HepG2 (cell line): ENCODE measurements at regions of chr5 and their contacts with region 1.

Region 1: DNA sequence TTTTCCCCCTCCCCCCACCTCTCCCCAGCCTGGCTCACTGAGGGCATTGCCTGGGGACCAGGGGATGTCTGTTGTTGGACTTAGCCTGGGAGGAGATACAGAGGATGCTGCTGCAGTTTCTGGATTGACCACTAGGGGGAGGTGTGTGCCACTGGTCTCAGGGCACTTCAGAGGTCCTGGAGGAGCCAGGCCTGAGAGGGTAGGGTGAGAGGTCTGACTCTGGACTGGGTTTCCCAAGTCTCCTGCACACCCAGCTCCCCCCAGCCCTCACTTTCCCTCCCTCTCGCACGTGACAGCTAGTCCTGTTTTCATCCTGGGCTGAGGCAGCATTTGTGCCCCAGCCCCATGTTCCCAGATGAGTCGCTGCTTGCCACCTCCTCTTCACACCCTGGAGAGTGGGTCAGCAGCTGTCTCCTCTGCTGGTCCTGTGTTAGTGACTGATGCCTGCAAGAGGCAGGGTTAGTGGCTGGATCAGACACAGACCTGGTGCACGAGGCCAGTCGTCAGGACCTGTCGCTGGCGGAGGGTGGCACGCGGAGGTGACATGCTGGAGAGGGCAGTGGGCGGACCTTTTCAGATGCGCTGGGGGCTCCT is 4.4 kb downstream of the IL3 start:
- DNase-seq: peak; percentile 52
- ATAC-seq: peak; percentile 85
- H3K4me3 ChIP-seq: no peak overlapping the region
- H3K27ac ChIP-seq: no peak overlapping the region
- H3K4me1 ChIP-seq: peaks cover 9% of the 10 kb centered on the region
- H3K27me3 ChIP-seq: peaks cover 4 to 26% of the 10 kb centered on the region in 2 experiments; a peak in 3 of 5 replicates
- CTCF ChIP-seq: peak; percentile 84
- EP300 ChIP-seq: no peak
- POLR2A ChIP-seq: no peak
- RAD21 ChIP-seq: peak; percentile 28; the same call in 1 of the 2 replicates

Region 2: DNA sequence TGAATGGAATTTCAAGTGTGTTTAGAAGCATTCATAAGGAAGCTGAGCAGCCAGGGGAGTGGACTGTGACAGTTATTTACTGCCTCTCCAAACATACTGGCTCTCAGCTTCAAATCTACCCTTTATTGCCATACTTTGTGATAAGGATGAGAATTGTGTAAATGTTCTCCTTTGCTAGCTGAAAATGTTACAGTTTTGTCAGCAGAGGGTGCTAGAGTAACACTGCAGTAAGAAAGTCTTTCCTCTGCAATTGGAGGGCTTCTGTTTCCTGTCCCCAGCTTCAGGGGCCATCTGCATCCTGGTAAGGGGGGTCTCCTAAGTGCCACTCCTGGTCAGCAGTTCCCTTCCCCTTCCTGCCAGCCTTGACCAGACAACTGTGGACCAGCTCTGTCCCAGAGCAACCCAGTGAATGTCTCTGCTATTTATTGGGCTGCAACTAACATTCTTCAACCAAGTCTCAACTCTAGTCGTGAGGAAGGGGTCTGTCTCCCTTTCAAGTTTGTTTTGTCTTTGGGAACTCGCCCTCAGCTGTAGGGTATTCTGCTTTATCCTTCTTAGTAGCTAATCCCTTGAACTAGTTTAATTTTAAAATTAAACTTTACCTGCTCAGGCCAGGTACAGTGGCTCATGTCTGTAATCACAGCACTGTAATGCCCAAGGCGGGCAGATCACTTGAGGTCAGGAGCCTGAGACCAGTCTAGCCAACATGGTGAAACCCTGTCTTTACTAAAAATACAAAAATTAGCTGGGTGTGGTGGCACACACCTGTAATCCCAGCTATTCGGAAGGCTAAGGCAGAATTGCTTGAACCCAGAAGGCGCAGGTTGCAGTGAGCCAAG is 475.1 kb before region 1 on chr5:
- CTCF ChIA-PET with region 1: no interaction called
- POLR2A ChIA-PET with region 1: no interaction called
- in situ Hi-C with region 1: no loop called
- intact Hi-C with region 1: loop called (anchors 1 kb)
- DNase-seq: peak; percentile 60
- ATAC-seq: peak; percentile 86
- H3K4me3 ChIP-seq: no peak overlapping the region
- H3K27ac ChIP-seq: no peak overlapping the region
- H3K4me1 ChIP-seq: peaks cover 15% of the 10 kb centered on the region; the same call in 1 of the 2 replicates
- H3K27me3 ChIP-seq: no peaks in the 10 kb centered on the region
- CTCF ChIP-seq: peak; percentile 87
- EP300 ChIP-seq: no peak
- POLR2A ChIP-seq: no peak
- RAD21 ChIP-seq: peak; percentile 87

Region 3: GRCh38 chr5:131810510-131811249 is 254.2 kb before region 1 on chr5:
- CTCF ChIA-PET with region 1: no interaction called
- POLR2A ChIA-PET with region 1: no interaction called
- in situ Hi-C with region 1: no loop called
- intact Hi-C with region 1: loop called (anchors 1 kb)
- DNase-seq: peak; percentile 16
- ATAC-seq: peak; percentile 66
- H3K4me3 ChIP-seq: no peak overlapping the region
- H3K27ac ChIP-seq: no peak overlapping the region
- H3K4me1 ChIP-seq: no peaks in the 10 kb centered on the region
- H3K27me3 ChIP-seq: no peaks in the 10 kb centered on the region; a peak in 1 of 5 replicates
- CTCF ChIP-seq: peak; percentile 72
- EP300 ChIP-seq: no peak
- POLR2A ChIP-seq: no peak
- RAD21 ChIP-seq: peak; percentile 67

Region 4: DNA sequence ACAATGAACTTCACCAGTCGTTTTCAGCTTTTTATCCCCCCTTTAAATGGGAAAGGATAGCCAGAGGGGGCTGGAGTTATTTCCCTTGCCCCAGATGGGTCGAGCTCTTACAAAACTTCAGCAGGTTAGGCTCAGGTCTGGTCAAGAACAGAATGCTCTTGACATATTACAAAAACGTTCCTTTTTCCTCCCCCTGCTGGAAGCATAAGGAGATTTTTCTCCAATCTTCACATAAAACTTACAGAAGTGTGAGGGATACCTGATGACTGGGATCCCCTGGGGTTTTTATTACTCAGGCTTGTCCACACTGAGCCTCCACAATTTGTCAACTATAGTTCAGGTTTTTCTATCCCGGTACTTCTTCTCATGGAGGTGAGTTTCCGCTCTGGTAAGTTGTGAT is 69.5 kb after region 1 on chr5:
- CTCF ChIA-PET with region 1: interaction called, 25 read pairs
- POLR2A ChIA-PET with region 1: no interaction called
- in situ Hi-C with region 1: no loop called
- intact Hi-C with region 1: loop called (anchors 1 kb)
- DNase-seq: peak; percentile 15
- ATAC-seq: peak; percentile 53; the same call in 2 of the 3 replicates
- H3K4me3 ChIP-seq: no peak overlapping the region
- H3K27ac ChIP-seq: no peak overlapping the region
- H3K4me1 ChIP-seq: no peaks in the 10 kb centered on the region
- H3K27me3 ChIP-seq: no peaks in the 10 kb centered on the region; a peak in 1 of 5 replicates
- CTCF ChIP-seq: peak; percentile 25; the same call in 1 of the 2 replicates
- EP300 ChIP-seq: no peak
- POLR2A ChIP-seq: no peak
- RAD21 ChIP-seq: no peak

Region 5: GRCh38 chr5:132176987-132177386 is 112.2 kb after region 1 on chr5:
- CTCF ChIA-PET with region 1: no interaction called
- POLR2A ChIA-PET with region 1: no interaction called
- in situ Hi-C with region 1: no loop called
- intact Hi-C with region 1: loop called (anchors 5 kb)
- DNase-seq: no peak
- ATAC-seq: no peak
- H3K4me3 ChIP-seq: no peak overlapping the region
- H3K27ac ChIP-seq: no peak overlapping the region
- H3K4me1 ChIP-seq: peaks cover 18% of the 10 kb centered on the region; the same call in 1 of the 2 replicates
- H3K27me3 ChIP-seq: no peaks in the 10 kb centered on the region
- CTCF ChIP-seq: no peak
- EP300 ChIP-seq: no peak
- POLR2A ChIP-seq: no peak
- RAD21 ChIP-seq: no peak

Region 6: GRCh38 chr5:132629230-132629944 is 564.6 kb after region 1 on chr5:
- CTCF ChIA-PET with region 1: no interaction called
- POLR2A ChIA-PET with region 1: no interaction called
- in situ Hi-C with region 1: no loop called
- intact Hi-C with region 1: no loop called
- DNase-seq: no peak
- ATAC-seq: no peak
- H3K4me3 ChIP-seq: no peak overlapping the region
- H3K27ac ChIP-seq: no peak overlapping the region
- H3K4me1 ChIP-seq: no peaks in the 10 kb centered on the region
- H3K27me3 ChIP-seq: no peaks in the 10 kb centered on the region
- CTCF ChIP-seq: no peak
- EP300 ChIP-seq: no peak
- POLR2A ChIP-seq: no peak
- RAD21 ChIP-seq: no peak